PC-9 (cell line): ENCODE measurements at regions of chr2 and their contacts with region 1.

Region 1: DNA sequence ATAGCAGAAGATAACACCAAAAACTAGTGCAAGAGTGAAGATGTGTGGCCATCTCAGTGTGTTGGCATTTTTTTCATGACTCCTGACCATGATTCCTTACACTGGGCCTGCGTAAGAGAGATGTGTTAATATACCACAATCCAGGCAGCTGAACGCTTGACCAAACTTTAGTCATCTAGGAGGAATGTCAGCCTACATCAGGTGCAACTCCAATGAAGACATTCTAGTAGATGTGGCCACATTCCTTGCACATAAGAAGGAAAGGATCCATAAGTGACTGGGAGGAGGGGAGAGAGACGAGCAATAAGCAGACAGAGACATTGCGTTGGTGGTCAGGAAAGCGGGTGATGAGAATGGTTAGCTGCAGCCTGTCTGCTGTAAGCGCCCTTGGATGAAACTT is 42.6 kb downstream of the CYRIA start:
- DNase-seq: peak; percentile 35 to 98
- H3K4me3 ChIP-seq: no peak overlapping the region
- H3K27ac ChIP-seq: peak overlapping the region; percentile 82
- H3K4me1 ChIP-seq: peaks cover 86% of the 10 kb centered on the region
- H3K27me3 ChIP-seq: no peaks in the 10 kb centered on the region
- CTCF ChIP-seq: no peak

Region 2: GRCh38 chr2:16664052-16664731 is 41.2 kb after region 1 on chr2:
- CTCF ChIA-PET with region 1: no interaction called
- POLR2A ChIA-PET with region 1: interaction called, 3 read pairs
- intact Hi-C with region 1: loop called (anchors 5 kb)
- DNase-seq: no peak
- H3K4me3 ChIP-seq: no peak overlapping the region; the same call in 1 of the 2 replicates
- H3K27ac ChIP-seq: no peak overlapping the region
- H3K4me1 ChIP-seq: peaks cover 9% of the 10 kb centered on the region
- H3K27me3 ChIP-seq: peaks cover 15% of the 10 kb centered on the region; the same call in 1 of the 2 replicates
- CTCF ChIP-seq: no peak